ENCODE measurements at regions of chr7 and their contacts with region 1.

Region 1: GRCh38 chr7:128739048-128739962 is at the start of gene CALU:
- DNase-seq: peak; percentile 95
- H3K4me3 Mint-ChIP-seq: peak within 1 kb of the TSS; percentile 100
- H3K27ac Mint-ChIP-seq: peak within 1 kb of the TSS; percentile 99
- H3K4me1 Mint-ChIP-seq: peaks cover 26% of the 10 kb centered on the region
- H3K27me3 Mint-ChIP-seq: no peaks in the 10 kb centered on the region
- total RNA-seq, gene CALU: 52.8 and 59.2 TPM in 2 replicates

Region 2: DNA sequence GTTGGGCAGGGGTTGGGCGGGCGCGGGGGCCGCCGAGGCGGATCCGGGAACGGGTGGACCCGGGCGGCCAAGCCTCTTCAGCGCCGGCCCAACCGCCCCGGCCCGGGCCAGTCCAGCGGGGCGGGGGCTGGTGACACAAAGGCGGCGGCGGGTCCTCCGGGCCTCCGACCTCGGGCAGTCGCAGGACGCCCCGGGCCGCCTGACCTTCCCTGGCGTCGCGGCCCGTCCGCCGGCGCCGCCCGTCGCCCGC is 208.5 kb before region 1 on chr7:
- intact Hi-C with region 1: loop called (anchors 2 kb)
- DNase-seq: no peak
- H3K4me3 Mint-ChIP-seq: no peak overlapping the region
- H3K27ac Mint-ChIP-seq: no peak overlapping the region
- H3K4me1 Mint-ChIP-seq: peaks cover 40% of the 10 kb centered on the region
- H3K27me3 Mint-ChIP-seq: no peaks in the 10 kb centered on the region

Region 3: DNA sequence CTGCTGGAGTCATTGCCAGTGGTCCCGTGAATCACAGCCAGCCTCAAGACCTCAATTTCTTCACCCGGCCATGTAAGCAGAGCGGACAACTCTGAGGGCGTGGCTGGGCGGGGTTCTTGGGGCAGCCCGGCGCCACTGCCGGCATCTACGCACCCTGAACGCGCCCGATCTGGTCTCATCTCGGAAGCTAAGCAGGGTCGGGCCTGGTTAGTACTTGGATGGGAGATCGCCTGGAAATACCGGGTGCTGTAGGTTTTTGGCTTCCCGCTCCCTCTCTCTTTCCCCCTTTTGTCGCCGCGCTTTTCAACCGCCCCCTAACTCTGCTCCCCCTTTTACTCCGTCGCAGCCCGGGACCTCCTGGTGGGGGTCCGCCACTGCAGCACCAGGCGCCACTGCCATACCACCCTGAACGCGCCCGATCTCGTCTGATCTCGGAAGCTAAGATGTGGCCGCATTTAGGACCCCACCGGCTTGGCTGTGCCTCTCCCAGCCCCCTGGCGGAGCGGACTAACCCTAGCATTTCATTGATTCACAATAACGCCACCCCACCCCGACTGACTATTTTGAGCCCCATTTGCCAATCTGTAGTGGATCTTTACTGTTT is 41.9 kb before region 1 on chr7:
- intact Hi-C with region 1: loop called (anchors 5 kb)
- DNase-seq: peak; percentile 45
- H3K4me3 Mint-ChIP-seq: peak overlapping the region; percentile 81
- H3K27ac Mint-ChIP-seq: no peak overlapping the region
- H3K4me1 Mint-ChIP-seq: peaks cover 7% of the 10 kb centered on the region
- H3K27me3 Mint-ChIP-seq: peaks cover 36% of the 10 kb centered on the region

Region 4: DNA sequence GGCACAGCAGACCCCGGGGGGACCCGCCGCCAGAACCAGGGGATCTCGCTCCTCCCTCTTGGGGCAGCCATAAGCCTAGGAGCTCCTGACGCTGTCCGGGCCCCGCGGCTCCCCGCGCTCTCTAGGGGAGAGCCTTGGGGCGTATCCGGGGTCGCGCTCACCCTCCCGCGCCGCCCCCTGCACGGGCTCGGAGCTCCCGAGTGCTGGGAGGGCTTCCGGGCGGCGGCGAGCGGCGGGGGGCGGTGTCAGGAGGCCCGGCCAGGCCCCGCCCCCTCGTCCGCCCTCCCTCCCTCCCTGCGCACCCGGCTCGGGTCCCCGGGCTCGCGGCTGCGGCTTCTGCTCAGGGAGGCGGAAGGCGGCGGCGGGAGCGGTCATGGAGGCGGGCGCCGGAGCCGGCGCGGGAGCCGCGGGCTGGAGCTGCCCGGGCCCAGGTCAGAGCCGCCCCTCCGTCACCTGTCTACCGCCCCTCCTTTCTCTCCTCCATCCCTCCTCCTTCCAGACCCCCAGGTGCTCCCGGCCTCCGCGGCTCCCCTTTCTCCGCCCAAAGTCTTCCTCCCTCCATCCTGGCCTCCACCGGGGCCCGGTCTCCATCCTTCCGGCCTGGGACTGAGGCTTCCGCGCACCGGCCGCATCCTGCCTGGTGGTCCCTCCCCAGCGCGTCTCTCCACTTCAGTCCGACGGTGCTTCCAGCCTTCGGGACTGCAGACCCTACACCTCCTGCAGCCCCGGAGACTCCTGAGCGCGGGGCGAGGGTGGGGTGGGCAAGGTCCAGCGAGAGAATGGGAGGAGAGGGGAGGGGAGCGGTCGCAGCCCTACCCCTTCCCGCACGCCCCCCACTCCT is 52.0 kb after region 1 on chr7:
- intact Hi-C with region 1: loop called (anchors 1 kb)
- DNase-seq: peak; percentile 70
- H3K4me3 Mint-ChIP-seq: peak overlapping the region; percentile 78
- H3K27ac Mint-ChIP-seq: no peak overlapping the region
- H3K4me1 Mint-ChIP-seq: peaks cover 4% of the 10 kb centered on the region
- H3K27me3 Mint-ChIP-seq: peaks cover 29% of the 10 kb centered on the region